Esophagus muscularis mucosa (tissue), 4 donors: ENCODE measurements at regions of chr12 and their contacts with region 1.

Region 1: GRCh38 chr12:42325653-42326474 is at the starts of genes PPHLN1 and ZCRB1:
- DNase-seq: peak; percentile 96
- H3K4me3 ChIP-seq: peak within 1 kb of the TSS; percentile 67 to 89 (median 76)
- H3K27ac ChIP-seq: peak within 1 kb of the TSS; percentile 85 to 92 (median 88)
- H3K4me1 ChIP-seq: peaks cover 18 to 46% (median 41%) of the 10 kb centered on the region in 4 donors
- H3K27me3 ChIP-seq: no peaks in the 10 kb centered on the region
- CTCF ChIP-seq: peak in 1 of 3 experiments; percentile 2
- EP300 ChIP-seq: no peak
- POLR2A ChIP-seq: no peak
- total RNA-seq, gene PPHLN1: 40.0 to 45.3 (median 42.1) TPM
- total RNA-seq, gene ZCRB1: 36.3 to 71.0 (median 42.4) TPM

Region 2: DNA sequence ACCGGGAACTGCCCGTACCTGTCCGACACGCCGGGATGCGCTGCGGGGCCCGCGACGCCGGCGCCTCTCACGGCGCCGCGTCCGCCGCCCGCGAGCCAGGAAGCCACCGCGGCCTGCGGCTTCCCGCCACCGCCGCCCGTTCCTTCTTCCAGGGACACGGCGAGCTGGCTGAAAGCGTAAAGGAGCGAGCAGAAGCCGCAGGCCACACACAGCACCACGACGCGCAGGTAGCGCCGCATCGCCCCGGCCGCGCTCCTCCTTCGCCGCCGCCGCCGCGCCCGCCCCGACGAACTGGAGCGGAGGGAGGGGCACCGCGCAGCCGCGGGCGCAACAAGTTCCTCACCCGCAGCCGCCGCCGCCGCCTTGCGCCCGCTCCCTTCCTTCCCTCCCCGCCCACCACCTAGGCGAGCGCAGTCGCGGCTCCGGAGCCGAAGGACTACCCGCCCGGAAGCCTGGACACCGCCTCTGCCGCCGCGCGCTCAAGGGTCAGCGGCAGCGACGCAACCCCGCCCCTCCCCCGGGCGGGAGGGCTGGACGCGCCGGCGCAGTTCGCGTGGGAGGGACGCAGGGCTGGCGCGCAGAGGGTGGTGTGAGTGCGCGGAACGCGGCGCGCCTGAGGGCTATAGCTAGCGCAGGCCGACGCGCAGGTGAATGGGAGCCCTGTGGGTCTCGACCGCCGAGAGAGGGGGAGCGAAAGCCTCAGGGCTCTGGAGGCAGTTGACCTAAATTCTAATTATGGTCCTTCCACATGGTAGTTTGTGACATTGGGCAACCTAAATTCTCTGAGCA is 181.3 kb before region 1 on chr12 and contains the start of gene GXYLT1:
- intact Hi-C with region 1: loop called (anchors 5 kb)
- DNase-seq: peak; percentile 94
- H3K4me3 ChIP-seq: peak within 1 kb of the TSS; percentile 78 to 89 (median 82)
- H3K27ac ChIP-seq: peak within 1 kb of the TSS; percentile 87 to 95 (median 90)
- H3K4me1 ChIP-seq: peaks cover 15 to 32% (median 24%) of the 10 kb centered on the region in 4 donors
- H3K27me3 ChIP-seq: no peaks in the 10 kb centered on the region
- CTCF ChIP-seq: peak in 1 of 3 experiments; percentile 3
- EP300 ChIP-seq: no peak
- POLR2A ChIP-seq: peak; percentile 32
- total RNA-seq, gene GXYLT1: 9.7 to 13.7 (median 12.1) TPM

Region 3: GRCh38 chr12:42238240-42239140 is 87.4 kb before region 1 on chr12 and contains the start of gene YAF2:
- intact Hi-C with region 1: loop called (anchors 2 kb)
- DNase-seq: peak; percentile 97
- H3K4me3 ChIP-seq: peak within 1 kb of the TSS; percentile 87 to 94 (median 90)
- H3K27ac ChIP-seq: peak within 1 kb of the TSS; percentile 93 to 98 (median 96)
- H3K4me1 ChIP-seq: peaks cover 31 to 49% (median 41%) of the 10 kb centered on the region in 4 donors
- H3K27me3 ChIP-seq: no peaks in the 10 kb centered on the region
- CTCF ChIP-seq: no peak
- EP300 ChIP-seq: no peak
- POLR2A ChIP-seq: no peak
- total RNA-seq, gene YAF2: 16.8 to 30.3 (median 20.4) TPM

Region 4: GRCh38 chr12:42396473-42397259 is 70.8 kb after region 1 on chr12:
- intact Hi-C with region 1: no loop called
- DNase-seq: no peak
- H3K4me3 ChIP-seq: no peak overlapping the region
- H3K27ac ChIP-seq: no peak overlapping the region
- H3K4me1 ChIP-seq: peaks cover 0 to 5% (median 0%) of the 10 kb centered on the region in 4 donors
- H3K27me3 ChIP-seq: no peaks in the 10 kb centered on the region
- CTCF ChIP-seq: no peak
- EP300 ChIP-seq: no peak
- POLR2A ChIP-seq: no peak

Region 5: DNA sequence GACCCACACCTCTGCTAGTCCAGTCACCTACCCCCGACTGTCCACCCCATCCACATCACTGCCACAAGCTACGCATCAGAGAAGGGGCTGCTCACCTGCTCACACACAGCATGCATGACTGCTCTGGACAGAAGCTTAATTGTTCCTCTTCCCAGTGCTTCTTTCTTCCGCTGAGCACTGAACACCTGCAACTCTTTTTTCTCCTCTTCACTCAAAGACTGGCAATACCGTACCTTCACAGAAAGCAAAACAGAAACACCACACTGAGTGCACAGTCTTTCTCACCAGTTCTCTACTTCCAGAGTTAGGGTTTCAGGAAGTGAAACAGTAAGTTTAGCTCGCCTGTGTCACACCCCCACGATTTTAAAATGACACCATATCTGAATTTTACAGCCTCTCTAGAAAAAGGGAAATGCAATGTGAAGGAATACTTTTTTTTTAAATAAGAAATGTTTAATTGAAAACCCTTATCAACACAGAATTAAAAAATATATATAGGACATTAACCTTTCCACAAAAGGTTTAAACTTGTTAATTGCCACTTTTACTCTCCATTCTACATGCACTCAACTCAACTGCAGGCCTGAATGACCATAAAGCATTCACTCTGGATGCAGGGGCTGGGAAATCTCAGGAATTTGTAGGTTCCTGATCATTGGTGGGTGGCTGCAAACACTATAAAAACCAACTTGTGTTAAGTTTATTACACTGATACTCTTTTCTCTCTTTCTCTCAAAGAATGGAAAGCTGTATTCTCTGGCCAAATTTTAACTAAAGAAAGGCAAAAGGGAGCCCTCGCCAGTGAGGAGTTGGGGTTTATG is 143.7 kb after region 1 on chr12:
- intact Hi-C with region 1: loop called (anchors 10 kb)
- DNase-seq: no peak
- H3K4me3 ChIP-seq: peak overlapping the region in 2 of 4 donors; percentile 0 to 15
- H3K27ac ChIP-seq: peak overlapping the region in 1 of 4 donors; percentile 23
- H3K4me1 ChIP-seq: peaks cover 35 to 56% (median 38%) of the 10 kb centered on the region in 4 donors
- H3K27me3 ChIP-seq: no peaks in the 10 kb centered on the region
- CTCF ChIP-seq: no peak
- EP300 ChIP-seq: no peak
- POLR2A ChIP-seq: no peak